A549 (cell line): ENCODE measurements at regions of chr19 and their contacts with region 1.

Region 1: DNA sequence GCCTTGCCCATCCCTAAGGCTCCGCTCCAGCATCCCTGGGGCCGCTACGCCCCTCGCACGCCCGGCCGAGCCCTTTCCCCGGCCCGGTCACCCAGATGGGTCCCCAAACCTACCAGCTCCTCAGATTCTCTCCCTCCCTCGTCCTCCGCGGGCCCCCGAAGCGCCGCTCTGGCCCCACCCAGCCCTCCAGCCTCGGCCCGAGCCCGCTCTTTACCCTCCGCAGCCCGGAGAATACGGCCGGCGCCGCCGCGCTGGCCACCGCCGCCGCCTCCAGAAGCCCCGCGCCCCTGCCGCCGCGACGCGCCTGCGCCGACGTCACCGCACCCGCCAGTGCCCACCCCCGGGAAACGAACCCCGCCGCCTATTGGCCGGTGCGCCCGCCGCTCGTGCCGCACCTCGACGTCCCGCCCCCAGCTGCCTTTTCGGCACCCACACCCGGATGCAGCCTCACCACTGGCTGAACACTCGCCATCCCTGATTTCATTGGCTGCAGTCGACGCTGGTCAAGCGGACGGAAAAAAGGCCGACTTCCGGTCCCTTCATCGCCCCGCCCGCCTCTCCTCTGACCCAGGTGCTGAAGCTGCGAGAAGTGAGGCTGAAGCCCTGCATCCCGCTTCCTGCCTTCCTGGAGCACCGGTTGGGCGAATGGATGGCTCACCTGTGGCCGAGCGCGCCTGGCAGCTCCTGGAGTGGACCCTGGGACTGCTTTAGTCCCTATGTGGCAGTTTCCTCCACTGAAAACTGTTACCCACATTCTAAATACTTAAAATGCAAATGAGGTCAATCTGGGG is at the start of gene DAPK3:
- DNase-seq: peak; percentile 75 to 95
- ATAC-seq: peak; percentile 72 to 80
- H3K4me3 ChIP-seq: peak within 1 kb of the TSS; percentile 89
- H3K27ac ChIP-seq: peak within 1 kb of the TSS; percentile 88 to 98
- H3K4me1 ChIP-seq: peaks cover 23% of the 10 kb centered on the region
- CTCF ChIP-seq: no peak
- EP300 ChIP-seq: no peak
- POLR2A ChIP-seq: peak; percentile 37; the same call in 1 of the 2 replicates
- RAD21 ChIP-seq: no peak
- polyA plus RNA-seq, gene DAPK3: 30.4 and 33.0 TPM in 2 replicates

Region 2: GRCh38 chr19:3942790-3943409 is 28.1 kb before region 1 on chr19:
- CTCF ChIA-PET with region 1: no interaction called
- POLR2A ChIA-PET with region 1: interaction called, 14 read pairs
- DNase-seq: peak in 1 of 2 experiments; percentile 26
- ATAC-seq: peak in 1 of 2 experiments; percentile 43; a peak in 3 of 6 replicates
- H3K4me3 ChIP-seq: no peak overlapping the region
- H3K27ac ChIP-seq: no peak overlapping the region
- H3K4me1 ChIP-seq: no peaks in the 10 kb centered on the region
- CTCF ChIP-seq: no peak
- EP300 ChIP-seq: no peak
- POLR2A ChIP-seq: no peak
- RAD21 ChIP-seq: no peak

Region 3: DNA sequence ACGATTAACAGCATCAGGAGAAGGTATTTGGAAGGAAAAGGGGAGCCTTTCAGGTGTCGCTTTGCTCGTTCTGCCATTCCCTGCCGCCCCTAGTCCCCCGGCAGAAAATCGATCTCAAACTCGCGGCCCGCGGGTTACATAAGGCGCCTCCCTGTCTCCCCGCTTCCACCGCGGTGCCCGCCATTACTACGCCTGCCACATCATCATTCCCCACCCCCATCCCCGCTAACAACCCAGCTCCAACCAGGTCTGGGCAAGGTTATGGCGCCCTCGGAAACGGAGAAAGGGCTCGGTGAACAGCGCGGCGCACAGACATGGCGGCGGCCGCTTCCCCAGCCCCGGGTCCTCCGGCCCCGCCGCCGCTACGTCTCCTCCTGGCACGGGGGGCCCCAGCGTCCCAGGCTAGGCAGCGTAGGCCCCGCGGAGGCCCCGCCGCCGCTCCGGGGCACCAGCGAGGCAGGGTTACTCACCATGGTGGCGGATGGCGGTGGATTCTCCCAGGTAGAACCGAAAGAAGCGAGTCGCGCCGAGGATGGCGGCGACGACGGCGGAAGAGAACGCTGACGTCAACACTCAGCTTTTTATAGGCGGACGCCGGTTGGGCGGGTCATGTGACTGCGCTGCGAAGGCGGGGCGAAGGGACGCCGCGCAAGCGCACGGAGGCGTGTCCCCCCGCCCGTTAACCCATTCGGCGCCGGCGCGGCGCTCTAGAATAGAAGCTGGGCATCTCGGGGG is 14.1 kb after region 1 on chr19 and contains the start of gene EEF2:
- CTCF ChIA-PET with region 1: interaction called, 16 read pairs
- POLR2A ChIA-PET with region 1: interaction called, 60 read pairs
- DNase-seq: peak; percentile 60 to 85
- ATAC-seq: peak; percentile 25 to 49; a peak in 4 of 6 replicates
- H3K4me3 ChIP-seq: peak within 1 kb of the TSS; percentile 96
- H3K27ac ChIP-seq: peak within 1 kb of the TSS; percentile 83 to 97
- H3K4me1 ChIP-seq: peaks cover 26% of the 10 kb centered on the region; the same call in 2 of the 3 replicates
- CTCF ChIP-seq: no peak
- EP300 ChIP-seq: no peak
- POLR2A ChIP-seq: peak; percentile 98
- RAD21 ChIP-seq: no peak
- polyA plus RNA-seq, gene EEF2: 526 and 680 TPM in 2 replicates